CD4-positive, alpha-beta memory T cell (primary cell): ENCODE measurements at regions of chr2 and their contacts with region 1.

Region 1: DNA sequence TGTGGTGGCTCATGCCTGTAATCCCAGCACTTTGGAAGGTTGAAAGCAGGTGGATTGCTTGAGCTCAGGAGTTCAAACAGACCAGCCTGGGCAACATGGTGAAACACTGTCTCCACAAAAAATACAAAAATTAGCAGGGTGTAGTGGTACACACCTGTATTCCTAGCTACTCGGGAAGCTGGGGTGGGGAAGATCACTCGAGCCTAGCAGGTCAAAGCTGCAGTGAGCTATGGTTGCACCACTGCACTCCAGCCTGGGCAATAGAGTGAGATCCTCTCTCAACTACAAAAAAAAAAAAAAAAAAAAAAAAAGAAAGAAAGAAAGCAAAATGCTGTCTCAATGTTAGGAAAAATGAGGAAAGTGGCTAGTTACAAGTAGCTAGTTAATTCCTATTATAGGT is 56.8 kb downstream of the TRIP12 start:
- DNase-seq: no peak
- H3K4me3 ChIP-seq: no peak overlapping the region
- H3K4me3 Mint-ChIP-seq: no peak overlapping the region
- H3K27ac ChIP-seq: no peak overlapping the region
- H3K27ac Mint-ChIP-seq: peak overlapping the region in 4 of 7 donors; percentile 18 to 61 (median 28)
- H3K4me1 ChIP-seq: peaks cover 42% of the 10 kb centered on the region
- H3K4me1 Mint-ChIP-seq: peaks cover 41 to 66% (median 51%) of the 10 kb centered on the region in 4 donors
- H3K27me3 ChIP-seq: no peaks in the 10 kb centered on the region
- H3K27me3 Mint-ChIP-seq: no peaks in the 10 kb centered on the region

Region 2: DNA sequence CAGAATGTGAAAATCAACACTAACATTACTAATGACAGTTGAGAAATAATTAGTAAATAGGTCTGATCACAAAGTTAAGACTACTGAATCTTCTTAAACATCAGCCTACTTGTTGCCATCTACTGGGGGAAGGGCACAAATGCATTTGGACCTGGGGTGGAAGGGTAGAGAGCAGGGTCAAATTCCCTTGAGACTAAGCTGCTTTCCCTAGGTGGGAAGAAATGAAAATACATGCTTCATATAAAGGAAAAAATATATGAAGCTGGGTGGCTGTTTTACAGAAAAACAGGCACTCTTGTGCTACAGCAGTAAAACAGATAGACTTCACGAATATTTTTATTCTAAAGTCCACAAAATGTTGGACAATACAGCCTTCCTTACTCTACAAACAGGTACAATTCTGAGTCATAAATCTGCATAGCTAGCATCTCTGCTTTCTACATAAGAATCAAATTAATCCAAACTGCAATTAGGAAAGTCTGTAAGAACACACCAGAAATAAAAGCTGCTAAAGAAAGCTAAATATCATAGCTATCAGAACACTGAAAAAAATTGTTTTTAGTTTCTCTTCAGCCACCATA is 45.9 kb after region 1 on chr2:
- CTCF ChIA-PET with region 1: interaction called, 13 read pairs
- POLR2A ChIA-PET with region 1: no interaction called
- intact Hi-C with region 1: no loop called
- DNase-seq: peak in 4 of 5 donors; percentile 22 to 35 (median 30)
- H3K4me3 ChIP-seq: no peak overlapping the region
- H3K4me3 Mint-ChIP-seq: peak overlapping the region in 4 of 8 donors; percentile 17 to 43 (median 30)
- H3K27ac ChIP-seq: peak overlapping the region; percentile 2
- H3K27ac Mint-ChIP-seq: peak overlapping the region in 6 of 7 donors; percentile 28 to 78 (median 48)
- H3K4me1 ChIP-seq: peaks cover 65% of the 10 kb centered on the region
- H3K4me1 Mint-ChIP-seq: peaks cover 32 to 60% (median 43%) of the 10 kb centered on the region in 4 donors
- H3K27me3 ChIP-seq: no peaks in the 10 kb centered on the region
- H3K27me3 Mint-ChIP-seq: no peaks in the 10 kb centered on the region